CD8-positive, alpha-beta memory T cell (primary cell): ENCODE measurements at regions of chr16 and their contacts with region 1.

Region 1: GRCh38 chr16:50806099-50807062 is 64.5 kb downstream of the CYLD start:
- DNase-seq: peak; percentile 76 to 89 (median 86)
- H3K4me3 ChIP-seq: peak overlapping the region; percentile 53
- H3K4me3 Mint-ChIP-seq: peak overlapping the region; percentile 15 to 87 (median 80)
- H3K27ac ChIP-seq: no peak overlapping the region
- H3K27ac Mint-ChIP-seq: peak overlapping the region; percentile 4 to 91 (median 78)
- H3K4me1 ChIP-seq: peaks cover 6% of the 10 kb centered on the region
- H3K4me1 Mint-ChIP-seq: peaks cover 8 to 12% (median 10%) of the 10 kb centered on the region in 3 donors
- H3K27me3 ChIP-seq: no peaks in the 10 kb centered on the region
- H3K27me3 Mint-ChIP-seq: peaks cover 0 to 2% of the 10 kb centered on the region in 2 donors

Region 2: DNA sequence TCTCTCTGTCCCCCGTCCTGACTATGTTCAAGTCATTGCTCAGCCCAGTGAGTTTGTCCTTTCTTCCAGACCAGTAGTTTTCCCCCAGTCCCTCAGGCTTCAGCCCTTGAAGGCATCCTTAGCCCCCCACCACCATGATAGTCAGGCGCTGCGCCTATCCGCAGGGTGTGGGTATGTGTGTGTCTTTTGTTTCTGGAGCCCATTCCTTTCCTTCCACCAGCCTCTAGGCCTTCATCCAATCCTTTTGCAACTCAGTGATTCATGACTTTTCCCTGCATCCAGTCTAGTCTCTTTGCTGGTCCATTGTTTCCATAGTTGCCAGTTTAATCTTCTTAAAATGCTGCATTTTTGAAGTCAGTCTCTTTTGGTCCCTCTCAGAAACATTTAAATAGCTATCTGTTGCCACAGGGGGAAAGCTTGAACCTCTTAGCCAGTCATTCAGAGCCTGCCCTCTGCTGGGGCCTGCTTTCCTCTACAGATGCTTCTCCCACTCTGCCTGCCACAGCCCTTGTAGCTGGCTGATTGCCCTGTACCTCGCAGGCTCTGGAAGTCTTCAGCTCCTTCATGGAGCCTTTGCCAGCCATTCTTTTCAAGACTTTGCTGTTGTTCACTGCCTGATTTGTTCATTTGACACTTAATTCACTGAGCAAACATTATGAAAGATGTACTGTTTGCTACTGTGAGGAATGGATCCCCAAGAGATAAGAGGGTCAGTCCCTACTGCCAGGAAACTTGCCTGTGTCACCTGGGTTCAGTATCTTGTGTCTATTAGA is 595.9 kb before region 1 on chr16:
- CTCF ChIA-PET with region 1: interaction called, 17 read pairs
- POLR2A ChIA-PET with region 1: no interaction called
- DNase-seq: peak; percentile 16 to 72 (median 45)
- H3K4me3 ChIP-seq: no peak overlapping the region
- H3K4me3 Mint-ChIP-seq: no peak overlapping the region
- H3K27ac ChIP-seq: no peak overlapping the region
- H3K27ac Mint-ChIP-seq: peak overlapping the region; percentile 7 to 89 (median 62)
- H3K4me1 ChIP-seq: no peaks in the 10 kb centered on the region
- H3K4me1 Mint-ChIP-seq: peaks cover 18 to 51% (median 32%) of the 10 kb centered on the region in 3 donors
- H3K27me3 ChIP-seq: no peaks in the 10 kb centered on the region
- H3K27me3 Mint-ChIP-seq: peaks cover 0 to 2% of the 10 kb centered on the region in 2 donors

Region 3: GRCh38 chr16:50354629-50355456 is 451.5 kb before region 1 on chr16:
- CTCF ChIA-PET with region 1: interaction called, 10 read pairs
- POLR2A ChIA-PET with region 1: no interaction called
- DNase-seq: peak in 2 of 5 donors; percentile 35 to 51
- H3K4me3 ChIP-seq: no peak overlapping the region
- H3K4me3 Mint-ChIP-seq: no peak overlapping the region
- H3K27ac ChIP-seq: no peak overlapping the region
- H3K27ac Mint-ChIP-seq: peak overlapping the region in 6 of 8 donors; percentile 0 to 91 (median 39)
- H3K4me1 ChIP-seq: peaks cover 15% of the 10 kb centered on the region
- H3K4me1 Mint-ChIP-seq: peaks cover 12 to 48% (median 33%) of the 10 kb centered on the region in 3 donors
- H3K27me3 ChIP-seq: no peaks in the 10 kb centered on the region
- H3K27me3 Mint-ChIP-seq: no peaks in the 10 kb centered on the region

Region 4: GRCh38 chr16:50719518-50720337 is 86.7 kb before region 1 on chr16:
- CTCF ChIA-PET with region 1: interaction called, 15 read pairs
- POLR2A ChIA-PET with region 1: no interaction called
- DNase-seq: peak in 1 of 5 donors; percentile 42
- H3K4me3 ChIP-seq: no peak overlapping the region
- H3K4me3 Mint-ChIP-seq: no peak overlapping the region
- H3K27ac ChIP-seq: no peak overlapping the region
- H3K27ac Mint-ChIP-seq: peak overlapping the region; percentile 4 to 77 (median 44)
- H3K4me1 ChIP-seq: peaks cover 29% of the 10 kb centered on the region
- H3K4me1 Mint-ChIP-seq: peaks cover 31 to 47% (median 46%) of the 10 kb centered on the region in 3 donors
- H3K27me3 ChIP-seq: no peaks in the 10 kb centered on the region
- H3K27me3 Mint-ChIP-seq: no peaks in the 10 kb centered on the region

Region 5: GRCh38 chr16:50781043-50781442 is 25.3 kb before region 1 on chr16:
- CTCF ChIA-PET with region 1: interaction called, 15 read pairs
- POLR2A ChIA-PET with region 1: no interaction called
- DNase-seq: no peak
- H3K4me3 ChIP-seq: no peak overlapping the region
- H3K4me3 Mint-ChIP-seq: peak overlapping the region in 6 of 7 donors; percentile 27 to 81 (median 58)
- H3K27ac ChIP-seq: no peak overlapping the region
- H3K27ac Mint-ChIP-seq: peak overlapping the region in 7 of 8 donors; percentile 71 to 92 (median 89)
- H3K4me1 ChIP-seq: peaks cover 14% of the 10 kb centered on the region
- H3K4me1 Mint-ChIP-seq: peaks cover 45 to 79% (median 71%) of the 10 kb centered on the region in 3 donors
- H3K27me3 ChIP-seq: no peaks in the 10 kb centered on the region
- H3K27me3 Mint-ChIP-seq: no peaks in the 10 kb centered on the region